Heart left ventricle (tissue), 16 donors: ENCODE measurements at regions of chr5 and their contacts with region 1.

Region 1: DNA sequence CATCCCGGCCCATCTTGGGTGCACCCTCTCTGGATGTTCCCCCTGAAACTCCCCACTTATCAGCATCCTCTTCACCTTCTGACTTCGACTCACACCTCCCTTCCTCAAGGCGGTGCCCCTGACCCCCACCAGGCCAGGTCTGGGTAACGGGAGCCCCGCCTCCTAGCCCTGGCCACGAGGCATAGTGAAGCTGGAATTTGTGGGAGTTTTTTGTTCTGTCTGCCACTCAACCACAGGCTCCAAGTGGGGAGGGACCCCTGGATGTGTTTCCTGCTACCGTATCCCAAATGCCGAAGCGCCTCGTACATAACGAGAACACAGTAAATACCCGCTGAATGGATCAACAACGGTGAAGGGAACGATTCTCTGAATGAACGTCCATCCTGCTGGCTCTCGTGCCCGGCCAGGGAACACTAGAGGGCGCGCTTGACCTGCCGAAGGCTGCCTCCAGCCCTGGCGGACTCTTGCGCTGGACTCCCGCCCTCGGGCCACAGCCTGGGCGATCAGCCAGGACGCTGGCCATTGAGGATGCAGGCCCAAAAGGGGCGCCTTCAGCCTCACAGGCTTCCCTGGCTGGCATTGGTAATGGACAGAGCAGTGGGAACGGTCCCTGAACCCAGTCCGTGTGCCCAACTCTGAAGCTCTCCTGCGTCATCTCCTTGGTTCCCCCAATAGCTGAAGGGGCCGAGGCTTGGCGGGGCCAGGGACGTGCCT is 47.3 kb upstream of the PHYKPL start:
- DNase-seq: peak; percentile 87 to 95 (median 90)
- ATAC-seq: peak; percentile 83 to 94 (median 92)
- H3K4me3 ChIP-seq: no peak overlapping the region
- H3K27ac ChIP-seq: no peak overlapping the region
- H3K4me1 ChIP-seq: peaks cover 0 to 14% (median under 1%) of the 10 kb centered on the region in 12 donors
- H3K27me3 ChIP-seq: no peaks in the 10 kb centered on the region
- CTCF ChIP-seq: peak; percentile 86 to 98 (median 94)
- POLR2A ChIP-seq: no peak

Region 2: GRCh38 chr5:178241231-178241663 is 38.6 kb before region 1 on chr5:
- intact Hi-C with region 1: no loop called
- DNase-seq: peak in 1 of 5 donors; percentile 61
- ATAC-seq: peak in 3 of 4 donors; percentile 16 to 56 (median 30)
- H3K4me3 ChIP-seq: no peak overlapping the region
- H3K27ac ChIP-seq: peak overlapping the region in 6 of 12 donors; percentile 11 to 92 (median 55)
- H3K4me1 ChIP-seq: peaks cover 3 to 66% (median 37%) of the 10 kb centered on the region in 12 donors
- H3K27me3 ChIP-seq: no peaks in the 10 kb centered on the region
- CTCF ChIP-seq: no peak
- POLR2A ChIP-seq: no peak

Region 3: DNA sequence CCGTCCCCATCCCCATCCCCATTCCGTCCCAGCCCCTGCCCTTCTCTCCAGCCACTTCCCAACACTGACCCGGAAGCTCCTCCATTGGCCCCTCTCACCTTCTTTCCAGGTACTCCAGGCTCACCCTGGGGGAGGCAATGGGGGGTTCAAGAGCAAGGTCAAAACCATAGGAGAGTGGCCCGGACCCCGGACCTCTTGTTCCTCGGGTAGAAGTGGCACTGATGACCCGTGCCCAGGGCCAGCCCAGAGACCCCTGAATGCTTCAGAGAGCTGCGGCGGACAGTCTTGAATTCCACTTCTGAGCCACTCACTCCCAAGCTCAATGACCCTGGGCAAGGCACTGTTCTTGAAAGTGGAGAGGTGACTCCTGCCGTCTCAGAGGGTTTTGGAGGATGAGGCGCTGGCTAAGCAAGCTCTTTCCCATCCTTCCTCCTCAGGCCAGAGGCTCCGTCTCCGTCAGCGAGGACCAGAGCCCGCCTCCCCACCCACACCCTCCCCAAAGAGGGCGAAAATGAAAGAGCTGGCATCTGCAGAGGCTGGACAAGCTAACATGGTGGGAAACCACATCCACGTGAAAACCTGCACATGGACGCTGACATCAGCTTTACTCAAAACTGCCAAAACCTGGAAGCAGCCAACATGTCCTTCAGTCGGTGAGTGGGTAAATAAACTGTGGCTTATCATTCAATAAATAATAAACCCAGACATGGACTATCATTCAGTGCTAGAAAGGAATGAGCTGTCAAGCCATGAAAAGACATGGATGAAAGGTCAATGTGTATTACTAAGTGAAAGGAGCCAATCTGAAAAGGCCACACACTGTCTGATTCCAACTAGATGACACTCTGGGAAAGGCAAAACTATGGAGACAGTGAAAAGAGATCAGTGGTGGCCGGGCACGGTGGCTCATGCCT is 20.0 kb before region 1 on chr5:
- intact Hi-C with region 1: no loop called
- DNase-seq: peak in 2 of 5 donors; percentile 13 to 37
- ATAC-seq: no peak
- H3K4me3 ChIP-seq: no peak overlapping the region
- H3K27ac ChIP-seq: no peak overlapping the region
- H3K4me1 ChIP-seq: no peaks in the 10 kb centered on the region
- H3K27me3 ChIP-seq: no peaks in the 10 kb centered on the region
- CTCF ChIP-seq: no peak
- POLR2A ChIP-seq: no peak

Region 4: DNA sequence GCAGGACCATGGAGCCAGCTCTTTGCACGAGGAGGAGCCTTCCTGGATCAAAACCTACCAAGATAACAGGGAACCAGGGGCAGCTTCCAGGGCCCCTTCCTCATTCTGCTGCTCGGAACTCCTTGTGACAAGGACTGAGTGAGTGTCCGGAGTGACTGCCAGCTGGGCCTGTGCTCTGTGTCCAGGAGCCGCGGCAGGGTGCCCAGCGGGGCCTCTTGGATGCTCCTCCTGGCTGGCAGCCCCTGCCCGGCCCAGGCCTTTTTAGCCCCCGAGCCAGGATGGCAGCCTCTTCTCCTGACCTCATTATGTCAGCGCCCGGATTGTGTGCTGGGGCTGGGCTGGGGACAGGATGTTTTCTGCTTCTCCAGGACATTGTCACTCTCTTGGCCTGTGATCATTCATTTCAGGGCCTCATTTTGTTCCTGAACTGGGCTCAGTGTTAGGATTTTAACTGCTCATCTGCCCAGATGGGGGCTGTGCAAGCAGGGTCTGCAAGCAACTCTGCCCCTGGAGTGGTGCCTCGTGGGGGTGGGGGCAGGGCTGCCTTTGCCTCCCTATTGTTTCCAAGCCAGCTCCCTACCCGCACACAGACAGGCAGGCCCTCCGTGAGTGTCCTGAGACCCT is 148.6 kb after region 1 on chr5:
- intact Hi-C with region 1: loop called in 3 of 10 experiments (anchors 10 kb)
- DNase-seq: peak; percentile 61 to 91 (median 85)
- ATAC-seq: peak; percentile 91 to 93 (median 91)
- H3K4me3 ChIP-seq: no peak overlapping the region
- H3K27ac ChIP-seq: peak overlapping the region; percentile 46 to 97 (median 76)
- H3K4me1 ChIP-seq: peaks cover 0 to 16% (median 4%) of the 10 kb centered on the region in 12 donors
- H3K27me3 ChIP-seq: no peaks in the 10 kb centered on the region
- CTCF ChIP-seq: no peak
- POLR2A ChIP-seq: no peak

Region 5: GRCh38 chr5:178453224-178453623 is 173.3 kb after region 1 on chr5:
- intact Hi-C with region 1: loop called in 1 of 10 experiments (anchors 10 kb)
- DNase-seq: no peak
- ATAC-seq: no peak
- H3K4me3 ChIP-seq: no peak overlapping the region
- H3K27ac ChIP-seq: no peak overlapping the region
- H3K4me1 ChIP-seq: peaks cover 0 to 11% (median 0%) of the 10 kb centered on the region in 12 donors
- H3K27me3 ChIP-seq: peaks cover 0 to 10% (median 0%) of the 10 kb centered on the region in 9 donors
- CTCF ChIP-seq: no peak
- POLR2A ChIP-seq: no peak

Region 6: GRCh38 chr5:178551059-178551458 is 271.2 kb after region 1 on chr5:
- intact Hi-C with region 1: loop called (anchors 1 to 5 kb)
- DNase-seq: no peak
- ATAC-seq: no peak
- H3K4me3 ChIP-seq: no peak overlapping the region
- H3K27ac ChIP-seq: peak overlapping the region in 1 of 12 donors; percentile 22
- H3K4me1 ChIP-seq: peaks cover 0 to 31% (median 7%) of the 10 kb centered on the region in 12 donors
- H3K27me3 ChIP-seq: no peaks in the 10 kb centered on the region
- CTCF ChIP-seq: peak; percentile 32 to 74 (median 52)
- POLR2A ChIP-seq: no peak

Region 7: DNA sequence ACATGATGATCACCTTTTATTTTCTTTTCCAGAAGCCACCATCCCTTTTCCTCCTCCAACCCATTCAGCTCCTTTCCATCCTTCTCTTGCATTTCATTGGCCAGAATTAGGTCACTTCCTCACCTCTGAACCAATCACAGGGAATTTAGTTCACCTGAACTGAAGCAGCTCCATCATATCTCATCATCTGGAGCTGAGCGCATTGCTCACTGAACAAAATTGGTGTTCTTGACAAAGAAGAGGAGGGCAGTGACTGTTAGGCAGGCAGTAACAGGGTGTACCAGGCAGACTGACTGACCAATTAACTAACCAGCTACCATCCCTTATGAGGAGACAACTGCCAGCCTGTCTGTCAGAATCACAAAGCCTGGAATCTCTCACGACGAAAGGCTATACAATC is 452.4 kb after region 1 on chr5:
- intact Hi-C with region 1: loop called in 1 of 10 experiments (anchors 5 kb)
- DNase-seq: no peak
- ATAC-seq: no peak
- H3K4me3 ChIP-seq: no peak overlapping the region
- H3K27ac ChIP-seq: no peak overlapping the region
- H3K4me1 ChIP-seq: peaks cover 0 to 15% (median 3%) of the 10 kb centered on the region in 12 donors
- H3K27me3 ChIP-seq: no peaks in the 10 kb centered on the region
- CTCF ChIP-seq: no peak
- POLR2A ChIP-seq: no peak

Region 8: DNA sequence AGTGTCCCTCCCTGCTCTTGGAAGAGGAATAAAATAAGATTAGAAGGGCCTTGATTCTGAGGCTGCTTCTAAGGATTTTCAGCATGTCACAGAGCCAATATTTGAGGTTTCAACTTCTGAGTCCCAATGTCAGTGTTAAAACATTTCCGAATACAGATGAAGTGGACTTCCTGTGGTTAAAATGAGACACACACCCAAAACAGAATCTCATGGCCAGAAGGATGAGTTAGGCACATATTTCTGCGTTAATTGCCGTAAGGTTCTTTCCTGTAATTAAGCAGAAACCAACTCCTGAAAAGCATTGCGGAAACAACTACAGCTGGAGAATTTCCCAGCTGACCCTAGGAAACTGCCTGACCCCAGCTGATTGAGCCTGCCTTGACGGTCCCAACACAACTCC is 569.4 kb after region 1 on chr5:
- intact Hi-C with region 1: loop called in 5 of 10 experiments (anchors 5 to 10 kb)
- DNase-seq: no peak
- ATAC-seq: no peak
- H3K4me3 ChIP-seq: no peak overlapping the region
- H3K27ac ChIP-seq: no peak overlapping the region
- H3K4me1 ChIP-seq: peaks cover 0 to 10% (median 0%) of the 10 kb centered on the region in 12 donors
- H3K27me3 ChIP-seq: no peaks in the 10 kb centered on the region
- CTCF ChIP-seq: no peak
- POLR2A ChIP-seq: no peak

Region 9: GRCh38 chr5:179534431-179534830 is 1254.5 kb after region 1 on chr5:
- intact Hi-C with region 1: no loop called
- DNase-seq: no peak
- ATAC-seq: no peak
- H3K4me3 ChIP-seq: no peak overlapping the region
- H3K27ac ChIP-seq: no peak overlapping the region
- H3K4me1 ChIP-seq: peaks cover 0 to 12% (median 0%) of the 10 kb centered on the region in 12 donors
- H3K27me3 ChIP-seq: peaks cover 0 to 7% (median 0%) of the 10 kb centered on the region in 9 donors
- CTCF ChIP-seq: no peak
- POLR2A ChIP-seq: no peak